ENCODE measurements at regions of chr15 and their contacts with region 1.

Region 1: DNA sequence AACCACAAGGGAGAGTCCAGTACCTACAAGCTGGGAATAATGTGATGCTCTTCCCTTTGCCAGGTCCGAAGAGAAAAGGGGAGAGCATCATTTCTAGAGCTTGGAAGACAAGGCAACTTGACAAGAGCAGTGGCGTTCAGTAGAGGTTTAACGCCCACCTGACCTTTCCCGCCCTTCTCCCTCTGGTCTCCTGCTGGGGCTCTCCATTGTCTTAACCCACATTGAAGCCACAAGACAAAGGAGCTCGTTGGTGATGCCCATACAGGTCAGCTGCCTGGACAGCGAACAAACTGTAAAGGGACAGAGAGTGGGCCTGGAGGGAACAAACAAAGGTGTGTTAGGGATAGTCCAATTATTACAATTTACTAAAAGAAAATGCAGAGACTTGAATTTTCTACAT is 13.1 kb upstream of the DUT start:
- DNase-seq: no peak
- ATAC-seq: no peak
- H3K4me3 Mint-ChIP-seq: no peak overlapping the region
- H3K27ac Mint-ChIP-seq: no peak overlapping the region
- H3K4me1 Mint-ChIP-seq: no peaks in the 10 kb centered on the region
- H3K27me3 Mint-ChIP-seq: peaks cover 2% of the 10 kb centered on the region

Region 2: DNA sequence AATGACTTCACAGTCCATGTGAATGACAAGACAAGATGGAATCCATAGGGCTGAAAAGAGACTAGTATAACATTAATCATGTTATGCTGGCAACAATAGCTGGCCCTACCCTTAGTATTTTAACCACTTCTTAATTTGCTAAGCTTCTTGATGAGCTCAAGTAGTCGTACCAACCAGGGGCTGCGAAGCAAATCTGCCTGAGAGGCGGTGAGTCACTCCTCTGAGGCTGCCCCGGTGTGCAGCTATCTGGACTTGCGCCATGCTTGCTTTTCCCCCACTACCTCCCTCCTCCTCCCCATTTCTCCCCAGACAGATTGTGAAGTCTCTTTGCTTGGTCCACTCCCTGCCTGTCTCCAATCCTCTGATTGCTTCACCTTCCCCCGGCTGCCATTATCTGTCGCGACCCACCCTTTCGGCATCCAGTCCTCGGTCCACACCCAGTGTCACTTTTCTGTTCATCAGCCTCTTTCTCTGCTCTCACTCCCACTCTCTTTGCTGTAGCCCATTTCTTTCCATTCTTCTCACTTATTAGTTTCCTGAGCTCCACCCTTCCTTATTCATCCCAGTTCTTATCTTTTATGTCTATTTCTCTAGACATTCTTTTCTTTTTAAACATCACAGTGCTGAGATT is 55.8 kb after region 1 on chr15:
- CTCF ChIA-PET with region 1: no interaction called
- POLR2A ChIA-PET with region 1: no interaction called
- intact Hi-C with region 1: loop called in 1 of 2 experiments (anchors 10 kb)
- DNase-seq: no peak
- ATAC-seq: no peak
- H3K4me3 Mint-ChIP-seq: no peak overlapping the region
- H3K27ac Mint-ChIP-seq: no peak overlapping the region
- H3K4me1 Mint-ChIP-seq: no peaks in the 10 kb centered on the region
- H3K27me3 Mint-ChIP-seq: peaks cover 30% of the 10 kb centered on the region

Region 3: GRCh38 chr15:48861813-48862431 is 543.8 kb after region 1 on chr15:
- CTCF ChIA-PET with region 1: no interaction called
- POLR2A ChIA-PET with region 1: no interaction called
- intact Hi-C with region 1: no loop called
- DNase-seq: peak; percentile 58
- ATAC-seq: peak; percentile 59
- H3K4me3 Mint-ChIP-seq: no peak overlapping the region
- H3K27ac Mint-ChIP-seq: no peak overlapping the region
- H3K4me1 Mint-ChIP-seq: peaks cover 6% of the 10 kb centered on the region
- H3K27me3 Mint-ChIP-seq: peaks cover 3% of the 10 kb centered on the region

Measured in activated CD4-positive, alpha-beta T cell treated with anti-CD3 and anti-CD28 coated beads for 36 hours (primary cell).